ENCODE measurements at regions of chr4 and their contacts with region 1.

Region 1: DNA sequence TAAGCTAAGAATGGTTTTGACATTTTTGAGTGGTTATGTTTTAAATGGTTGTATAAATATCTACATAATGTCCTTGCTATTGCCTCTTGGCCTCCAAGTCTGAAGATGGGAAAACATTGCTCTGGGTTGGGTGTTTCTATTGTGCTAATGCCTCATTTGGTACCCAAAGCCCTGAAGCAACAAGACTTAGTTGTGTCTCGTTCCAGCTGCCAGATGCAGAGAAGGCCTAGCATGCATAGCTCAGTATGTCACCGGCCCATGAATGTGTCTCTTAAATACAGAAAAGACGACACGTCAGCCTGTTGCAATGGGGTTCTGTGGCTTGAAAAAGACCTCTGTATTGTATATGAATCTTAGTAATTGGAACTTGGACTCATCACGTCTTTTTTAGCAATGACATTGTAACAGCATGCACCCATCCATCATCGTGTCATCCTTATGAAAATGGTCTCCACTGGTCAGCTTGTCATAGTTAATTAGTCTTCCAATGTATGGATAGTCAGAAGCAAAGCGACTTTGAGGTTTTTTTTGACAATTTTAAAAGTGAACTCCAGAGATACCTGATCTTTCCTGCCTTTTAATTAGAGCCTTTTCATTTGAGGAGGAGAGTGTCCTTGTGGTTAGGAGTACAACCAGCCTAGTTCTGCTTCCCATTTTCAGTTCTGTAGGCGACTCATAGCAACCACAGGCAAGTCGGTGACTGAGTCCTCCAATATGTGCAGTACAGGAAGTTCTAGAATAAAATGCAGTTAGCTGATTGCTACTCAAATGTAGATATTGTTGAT is 126.4 kb upstream of the GATB start:
- DNase-seq: peak; percentile 87
- ATAC-seq: peak; percentile 82
- H3K4me3 ChIP-seq: no peak overlapping the region
- H3K27ac ChIP-seq: peak overlapping the region; percentile 80
- H3K4me1 ChIP-seq: peaks cover 41% of the 10 kb centered on the region
- H3K27me3 ChIP-seq: no peaks in the 10 kb centered on the region
- CTCF ChIP-seq: no peak
- EP300 ChIP-seq: peak; percentile 55 to 85; a peak in 1 of 4 replicates
- POLR2A ChIP-seq: no peak
- RAD21 ChIP-seq: no peak

Region 2: GRCh38 chr4:151760712-151761527 is 126.3 kb before region 1 on chr4 and contains the start of gene GATB:
- CTCF ChIA-PET with region 1: no interaction called
- POLR2A ChIA-PET with region 1: no interaction called
- RAD21 ChIA-PET with region 1: no interaction called
- SMC1A ChIA-PET with region 1: no interaction called
- in situ Hi-C with region 1: no loop called
- intact Hi-C with region 1: loop called (anchors 1 kb)
- DNase-seq: peak; percentile 92
- ATAC-seq: peak; percentile 100
- H3K4me3 ChIP-seq: peak within 1 kb of the TSS; percentile 91
- H3K27ac ChIP-seq: peak within 1 kb of the TSS; percentile 45
- H3K4me1 ChIP-seq: no peaks in the 10 kb centered on the region
- H3K27me3 ChIP-seq: no peaks in the 10 kb centered on the region
- CTCF ChIP-seq: peak; percentile 47 to 57 (median 52)
- EP300 ChIP-seq: no peak
- POLR2A ChIP-seq: peak; percentile 92
- RAD21 ChIP-seq: peak; percentile 54
- polyA plus RNA-seq, gene GATB: 20.5 to 25.6 TPM

Region 3: GRCh38 chr4:151801547-151802516 is 85.4 kb before region 1 on chr4:
- CTCF ChIA-PET with region 1: interaction called, 9 read pairs
- POLR2A ChIA-PET with region 1: no interaction called
- RAD21 ChIA-PET with region 1: interaction called, 5 read pairs
- SMC1A ChIA-PET with region 1: interaction called, 9 read pairs
- in situ Hi-C with region 1: no loop called
- intact Hi-C with region 1: loop called (anchors 2 kb)
- DNase-seq: no peak
- ATAC-seq: peak; percentile 66
- H3K4me3 ChIP-seq: no peak overlapping the region
- H3K27ac ChIP-seq: no peak overlapping the region
- H3K4me1 ChIP-seq: peaks cover 7% of the 10 kb centered on the region; the same call in 1 of the 2 replicates
- H3K27me3 ChIP-seq: no peaks in the 10 kb centered on the region
- CTCF ChIP-seq: peak; percentile 64 to 90 (median 80)
- EP300 ChIP-seq: no peak
- POLR2A ChIP-seq: no peak
- RAD21 ChIP-seq: peak; percentile 51

Region 4: DNA sequence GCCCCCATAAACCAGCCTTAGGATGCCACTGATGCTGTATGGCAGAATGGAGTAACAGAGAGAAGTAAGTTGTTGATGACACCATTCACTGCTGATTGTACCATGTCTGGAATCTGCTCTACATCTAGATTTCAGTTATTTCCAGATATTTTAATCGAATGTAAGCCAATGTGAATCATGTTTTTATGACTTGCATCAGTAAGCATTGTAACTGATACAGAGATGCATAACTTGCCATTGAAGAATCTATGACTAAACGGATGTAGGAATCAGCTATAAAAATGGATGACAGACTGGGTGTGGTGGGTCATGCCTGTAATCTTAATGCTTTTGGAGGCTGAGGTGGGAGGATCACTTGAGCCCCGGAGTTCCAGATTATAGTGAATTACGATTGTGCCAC is 34.6 kb after region 1 on chr4:
- CTCF ChIA-PET with region 1: no interaction called
- POLR2A ChIA-PET with region 1: no interaction called
- RAD21 ChIA-PET with region 1: no interaction called
- SMC1A ChIA-PET with region 1: no interaction called
- in situ Hi-C with region 1: no loop called
- intact Hi-C with region 1: no loop called
- DNase-seq: no peak
- ATAC-seq: no peak
- H3K4me3 ChIP-seq: no peak overlapping the region
- H3K27ac ChIP-seq: no peak overlapping the region
- H3K4me1 ChIP-seq: no peaks in the 10 kb centered on the region
- H3K27me3 ChIP-seq: no peaks in the 10 kb centered on the region
- CTCF ChIP-seq: no peak
- EP300 ChIP-seq: no peak
- POLR2A ChIP-seq: no peak
- RAD21 ChIP-seq: no peak

Region 5: DNA sequence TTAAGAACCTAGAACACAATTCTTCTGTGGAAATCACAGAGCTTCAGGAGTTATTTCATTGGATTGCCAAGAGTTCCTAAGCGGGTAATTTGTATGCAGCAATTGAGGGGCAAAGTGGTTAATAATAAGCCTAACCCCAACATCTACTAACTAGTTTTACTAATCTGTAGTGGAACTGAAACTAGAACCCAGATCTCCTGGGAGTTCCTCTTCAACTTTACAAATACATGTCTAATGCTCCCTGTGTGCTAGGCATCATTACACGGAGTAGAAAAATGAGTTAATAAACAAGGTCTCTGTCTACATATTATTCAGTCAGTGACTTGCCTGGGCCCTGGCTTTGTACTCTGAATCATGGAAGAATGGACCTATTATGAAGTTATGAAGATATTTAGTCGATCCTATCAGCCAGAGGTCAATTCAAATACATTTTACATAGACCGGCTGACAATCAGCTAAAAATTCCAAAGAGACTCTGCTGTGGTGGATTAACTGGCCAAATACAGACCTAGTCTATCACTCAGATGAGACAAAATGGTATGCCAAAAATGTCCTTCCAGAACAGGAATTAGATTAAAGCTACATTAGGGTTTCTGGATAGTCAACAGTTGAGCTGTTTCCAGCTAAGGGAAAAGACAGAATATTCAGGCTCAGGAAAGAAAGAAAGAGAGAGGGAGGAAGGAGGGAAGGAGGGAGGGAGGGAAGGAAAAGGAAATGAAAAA is 322.7 kb after region 1 on chr4:
- CTCF ChIA-PET with region 1: no interaction called
- POLR2A ChIA-PET with region 1: no interaction called
- RAD21 ChIA-PET with region 1: no interaction called
- SMC1A ChIA-PET with region 1: no interaction called
- in situ Hi-C with region 1: no loop called
- intact Hi-C with region 1: loop called (anchors 5 kb)
- DNase-seq: peak; percentile 53
- ATAC-seq: peak; percentile 87
- H3K4me3 ChIP-seq: no peak overlapping the region
- H3K27ac ChIP-seq: no peak overlapping the region
- H3K4me1 ChIP-seq: no peaks in the 10 kb centered on the region
- H3K27me3 ChIP-seq: no peaks in the 10 kb centered on the region
- CTCF ChIP-seq: no peak
- EP300 ChIP-seq: peak in 1 of 2 experiments; percentile 62; a peak in 1 of 4 replicates
- POLR2A ChIP-seq: no peak
- RAD21 ChIP-seq: no peak

Region 6: DNA sequence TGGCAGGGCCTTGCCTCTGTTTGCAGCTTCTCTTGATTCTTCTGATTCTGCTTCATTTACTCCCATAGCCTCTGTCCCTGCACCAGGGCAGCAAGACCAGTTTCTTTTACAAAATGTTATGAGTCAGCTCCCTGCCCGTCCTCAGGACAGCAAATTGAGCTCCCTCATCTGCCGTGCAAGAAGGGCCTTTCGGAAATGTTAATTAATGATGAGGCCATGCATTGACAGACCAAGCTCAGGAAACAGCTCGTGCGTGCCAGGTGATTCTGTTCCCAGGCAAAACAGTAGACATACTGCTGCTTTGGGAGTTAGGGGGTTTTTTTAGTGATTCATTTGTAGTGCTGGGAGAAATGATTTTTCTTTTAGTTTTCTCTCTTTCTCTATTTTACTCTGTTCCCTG is 417.0 kb after region 1 on chr4:
- CTCF ChIA-PET with region 1: no interaction called
- POLR2A ChIA-PET with region 1: no interaction called
- RAD21 ChIA-PET with region 1: interaction called, 6 read pairs
- SMC1A ChIA-PET with region 1: no interaction called
- in situ Hi-C with region 1: no loop called
- intact Hi-C with region 1: loop called (anchors 1 kb)
- DNase-seq: peak; percentile 71
- ATAC-seq: peak; percentile 95
- H3K4me3 ChIP-seq: no peak overlapping the region
- H3K27ac ChIP-seq: peak overlapping the region; percentile 28; the same call in 1 of the 2 replicates
- H3K4me1 ChIP-seq: no peaks in the 10 kb centered on the region
- H3K27me3 ChIP-seq: no peaks in the 10 kb centered on the region
- CTCF ChIP-seq: no peak
- EP300 ChIP-seq: peak; percentile 61 to 78; a peak in 3 of 4 replicates
- POLR2A ChIP-seq: no peak
- RAD21 ChIP-seq: no peak

Region 7: GRCh38 chr4:152860051-152860450 is 972.8 kb after region 1 on chr4:
- CTCF ChIA-PET with region 1: no interaction called
- POLR2A ChIA-PET with region 1: no interaction called
- RAD21 ChIA-PET with region 1: no interaction called
- SMC1A ChIA-PET with region 1: no interaction called
- in situ Hi-C with region 1: no loop called
- intact Hi-C with region 1: no loop called
- DNase-seq: no peak
- ATAC-seq: no peak
- H3K4me3 ChIP-seq: no peak overlapping the region
- H3K27ac ChIP-seq: no peak overlapping the region
- H3K4me1 ChIP-seq: no peaks in the 10 kb centered on the region
- H3K27me3 ChIP-seq: no peaks in the 10 kb centered on the region
- CTCF ChIP-seq: no peak
- EP300 ChIP-seq: no peak
- POLR2A ChIP-seq: no peak
- RAD21 ChIP-seq: no peak

Region 8: GRCh38 chr4:152894673-152895072 is 1007.5 kb after region 1 on chr4:
- CTCF ChIA-PET with region 1: no interaction called
- POLR2A ChIA-PET with region 1: no interaction called
- RAD21 ChIA-PET with region 1: no interaction called
- SMC1A ChIA-PET with region 1: no interaction called
- in situ Hi-C with region 1: no loop called
- intact Hi-C with region 1: no loop called
- DNase-seq: no peak
- ATAC-seq: no peak
- H3K4me3 ChIP-seq: no peak overlapping the region
- H3K27ac ChIP-seq: no peak overlapping the region
- H3K4me1 ChIP-seq: no peaks in the 10 kb centered on the region
- H3K27me3 ChIP-seq: no peaks in the 10 kb centered on the region
- CTCF ChIP-seq: no peak
- EP300 ChIP-seq: no peak
- POLR2A ChIP-seq: no peak
- RAD21 ChIP-seq: no peak